Colonic mucosa (tissue), 4 donors: ENCODE measurements at regions of chr12 and their contacts with region 1.

Region 1: GRCh38 chr12:49707812-49708147 is 575 bp upstream of the FMNL3 start:
- DNase-seq: no peak
- H3K4me3 ChIP-seq: no peak overlapping the region
- H3K27ac ChIP-seq: no peak overlapping the region
- H3K4me1 ChIP-seq: no peaks in the 10 kb centered on the region
- H3K27me3 ChIP-seq: no peaks in the 10 kb centered on the region
- CTCF ChIP-seq: no peak

Region 2: DNA sequence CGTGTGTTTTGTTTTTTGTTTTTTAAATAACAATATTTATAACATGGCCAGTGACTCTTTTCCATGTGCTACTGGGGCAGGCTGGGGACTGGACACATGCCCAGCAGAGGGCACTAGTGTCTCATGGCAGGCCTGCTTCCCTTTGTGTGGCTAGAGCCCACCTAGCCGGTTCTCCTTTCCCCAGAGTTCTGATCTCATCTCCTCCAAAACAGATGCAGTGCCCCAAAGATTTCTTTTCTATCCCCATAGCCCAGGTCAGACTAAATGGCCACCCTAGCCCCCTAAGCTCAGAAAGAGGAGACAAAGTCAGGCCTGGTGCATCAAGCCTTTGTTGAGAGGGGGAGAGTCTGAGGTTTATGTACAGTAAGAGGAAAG is 63.2 kb before region 1 on chr12:
- intact Hi-C with region 1: loop called (anchors 1 kb)
- DNase-seq: peak; percentile 77
- H3K4me3 ChIP-seq: no peak overlapping the region
- H3K27ac ChIP-seq: no peak overlapping the region
- H3K4me1 ChIP-seq: no peaks in the 10 kb centered on the region
- H3K27me3 ChIP-seq: no peaks in the 10 kb centered on the region
- CTCF ChIP-seq: peak; percentile 94